ENCODE measurements at regions of chr10 and their contacts with region 1.

Region 1: DNA sequence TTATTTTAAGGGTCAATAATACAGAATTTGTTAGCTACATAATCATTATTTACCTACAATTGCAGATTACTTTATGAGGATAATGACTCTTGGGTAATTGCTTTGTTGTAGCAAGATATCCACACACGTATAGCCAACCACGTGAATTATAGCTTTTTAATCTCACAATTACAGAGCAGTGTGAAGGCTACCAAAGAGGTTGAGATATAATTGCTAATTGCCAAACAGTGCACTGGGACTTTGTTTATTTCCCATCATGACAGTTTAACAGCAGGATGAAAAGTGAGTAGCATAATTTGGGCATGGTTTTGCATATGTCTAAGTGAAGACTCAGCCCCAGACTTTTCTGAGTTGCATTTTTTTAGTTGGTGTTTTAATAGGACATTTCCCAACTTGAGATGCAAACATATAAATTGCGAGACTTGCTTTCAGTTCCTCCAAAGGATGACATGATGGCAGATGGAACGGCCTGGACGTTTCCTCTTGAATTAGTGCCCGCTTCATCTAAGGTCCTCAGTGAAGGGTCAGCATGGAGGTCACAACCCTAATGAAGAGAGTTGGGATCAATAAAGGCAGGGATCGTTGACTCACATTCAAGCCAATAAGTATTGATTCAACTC is 180.7 kb upstream of the GPR26 start:
- DNase-seq: no peak
- H3K27ac ChIP-seq: no peak overlapping the region
- CTCF ChIP-seq: no peak

Region 2: GRCh38 chr10:123221418-123221817 is 264.0 kb before region 1 on chr10:
- CTCF ChIA-PET with region 1: interaction called, 11 read pairs
- POLR2A ChIA-PET with region 1: no interaction called
- DNase-seq: no peak
- H3K27ac ChIP-seq: no peak overlapping the region
- CTCF ChIP-seq: no peak